ENCODE measurements at regions of chr7 and their contacts with region 1.

Region 1: DNA sequence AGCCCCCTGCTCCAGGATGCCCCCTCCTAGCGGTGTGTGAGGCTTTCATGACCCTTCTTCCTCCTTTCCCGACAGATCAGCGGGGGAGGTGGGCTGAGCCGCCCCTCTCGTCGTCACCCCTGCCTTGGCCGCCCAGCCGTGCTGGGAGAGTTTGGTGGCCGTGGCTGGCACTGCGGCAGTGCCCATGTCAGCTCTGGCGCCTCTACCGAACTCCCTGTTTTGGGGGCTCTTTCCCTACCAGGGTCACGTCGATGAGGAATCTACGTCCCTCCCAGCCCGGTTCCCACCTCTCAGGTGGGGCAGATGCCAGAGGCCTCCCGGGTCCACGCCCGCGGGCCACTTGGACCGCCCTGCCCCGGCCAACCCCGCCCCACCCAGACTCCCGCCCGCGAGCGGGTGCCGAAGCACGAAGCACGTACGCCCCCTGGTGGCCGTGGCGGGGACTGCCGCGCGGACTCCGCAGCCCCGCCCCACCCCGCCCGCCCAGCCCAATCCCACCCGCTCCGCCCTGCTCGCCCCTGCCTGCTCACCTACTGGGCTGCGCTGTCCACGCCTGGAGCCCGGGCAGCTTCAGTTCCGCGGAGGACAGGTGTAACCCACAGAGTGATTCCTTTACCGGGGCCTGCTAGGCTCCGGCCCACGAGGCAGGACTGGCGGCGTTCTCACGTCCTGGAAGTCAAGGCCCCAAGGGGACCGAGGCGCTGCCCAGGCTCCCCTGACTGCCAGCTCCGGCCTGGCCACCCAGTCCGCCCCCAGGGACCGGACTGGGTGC is 127.1 kb downstream of the UBE2H start:
- DNase-seq: peak; percentile 90
- H3K4me3 ChIP-seq: peak overlapping the region in 2 of 3 donors; percentile 16 to 75
- H3K27ac ChIP-seq: peak overlapping the region; percentile 34 to 67 (median 49)
- H3K4me1 ChIP-seq: peaks cover 22 to 27% of the 10 kb centered on the region in 2 donors
- H3K27me3 ChIP-seq: no peaks in the 10 kb centered on the region
- CTCF ChIP-seq: peak; percentile 47 to 100 (median 75)
- POLR2A ChIP-seq: no peak

Region 2: DNA sequence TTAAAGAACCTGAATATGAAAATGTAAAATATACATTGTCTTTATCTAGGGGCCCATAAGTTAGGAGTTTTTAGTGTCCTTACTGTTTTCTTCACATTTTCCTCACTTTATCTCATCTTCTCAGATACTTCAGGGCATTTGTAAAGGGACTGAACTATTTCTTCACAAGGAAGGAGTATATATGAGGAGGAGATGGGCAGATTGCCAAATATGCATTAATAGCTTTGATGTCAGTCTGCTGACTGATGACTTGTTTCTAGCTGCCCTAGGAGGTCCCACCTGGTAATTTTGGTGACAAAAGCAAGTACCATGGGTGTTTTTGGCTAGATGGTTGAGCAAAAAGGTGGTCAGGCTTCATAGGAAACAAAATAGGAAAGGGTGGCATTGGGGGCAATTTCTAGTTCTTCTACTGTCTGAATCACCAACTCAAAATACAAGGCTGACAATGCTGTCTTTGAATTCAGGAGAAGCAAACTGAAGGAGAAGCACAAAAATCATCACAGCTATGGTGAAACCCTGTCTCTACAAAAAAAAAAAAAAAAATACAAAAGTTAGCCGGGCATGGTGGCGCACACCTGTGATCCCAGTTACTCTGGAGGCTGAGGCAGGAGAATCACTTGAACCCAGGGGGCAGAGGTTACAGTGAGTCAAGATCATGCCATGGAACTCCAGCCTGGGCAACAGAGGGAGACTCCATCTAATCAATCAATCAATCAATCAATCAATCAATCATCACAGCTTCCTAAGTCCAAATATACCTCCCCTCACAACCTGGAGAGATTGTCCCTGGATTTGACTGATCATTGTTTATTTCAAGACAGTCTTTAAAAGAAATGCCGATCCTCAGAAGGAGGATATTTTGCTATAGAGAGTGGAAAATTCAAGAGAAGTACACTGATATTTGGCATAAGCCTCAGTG is 401.7 kb before region 1 on chr7:
- intact Hi-C with region 1: no loop called
- DNase-seq: no peak
- H3K4me3 ChIP-seq: no peak overlapping the region
- H3K27ac ChIP-seq: no peak overlapping the region
- H3K4me1 ChIP-seq: peaks cover 0 to 4% of the 10 kb centered on the region in 2 donors
- H3K27me3 ChIP-seq: no peaks in the 10 kb centered on the region
- CTCF ChIP-seq: no peak
- POLR2A ChIP-seq: no peak

Region 3: DNA sequence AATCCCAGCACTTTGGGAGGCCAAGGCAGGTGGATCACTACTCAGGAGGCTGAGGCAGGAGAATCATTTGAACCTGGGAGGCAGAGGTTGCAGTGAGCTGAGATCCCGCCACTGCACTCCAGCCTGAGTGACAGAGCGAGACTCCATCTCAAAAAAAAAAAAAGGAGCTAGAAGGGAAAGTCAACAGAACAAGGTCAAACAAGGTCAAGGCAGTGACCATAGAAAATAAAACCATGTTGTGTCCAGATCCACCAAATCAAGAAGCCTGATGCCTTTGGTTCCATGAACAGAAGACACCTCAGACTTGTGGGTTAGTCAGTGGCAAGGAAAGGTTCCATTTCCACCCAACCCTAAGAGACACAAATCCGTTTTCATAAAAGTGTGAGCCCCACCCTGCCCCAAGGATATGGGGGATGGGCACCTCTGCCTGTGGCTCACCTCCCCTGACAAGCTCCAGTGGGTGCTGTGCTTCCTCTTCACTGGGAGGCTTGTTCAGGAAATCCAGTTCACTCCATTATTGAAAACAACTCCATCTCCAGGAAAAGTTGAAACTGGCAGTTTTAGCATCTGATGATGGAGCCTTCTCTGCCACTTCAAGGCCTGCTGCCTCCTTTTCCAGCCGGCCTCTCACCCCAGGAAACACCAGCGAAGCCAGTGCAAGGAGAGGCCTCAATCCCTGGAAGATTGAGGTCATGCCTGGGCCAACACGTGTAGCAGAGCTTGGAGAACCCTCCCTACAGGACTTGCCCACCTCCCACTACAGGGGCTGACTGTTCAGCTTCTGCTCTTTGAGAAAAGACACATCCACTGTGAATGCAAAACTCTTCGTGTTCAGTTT is 61.2 kb before region 1 on chr7:
- intact Hi-C with region 1: no loop called
- DNase-seq: no peak
- H3K4me3 ChIP-seq: no peak overlapping the region
- H3K27ac ChIP-seq: no peak overlapping the region
- H3K4me1 ChIP-seq: no peaks in the 10 kb centered on the region
- H3K27me3 ChIP-seq: no peaks in the 10 kb centered on the region
- CTCF ChIP-seq: no peak
- POLR2A ChIP-seq: no peak

Region 4: GRCh38 chr7:129896568-129897382 is 71.1 kb after region 1 on chr7:
- intact Hi-C with region 1: no loop called
- DNase-seq: no peak
- H3K4me3 ChIP-seq: no peak overlapping the region
- H3K27ac ChIP-seq: no peak overlapping the region
- H3K4me1 ChIP-seq: peaks cover 13 to 19% of the 10 kb centered on the region in 2 donors
- H3K27me3 ChIP-seq: no peaks in the 10 kb centered on the region
- CTCF ChIP-seq: no peak
- POLR2A ChIP-seq: no peak

Region 5: GRCh38 chr7:129923709-129924108 is 98.0 kb after region 1 on chr7:
- intact Hi-C with region 1: no loop called
- DNase-seq: peak; percentile 14 to 16
- H3K4me3 ChIP-seq: no peak overlapping the region
- H3K27ac ChIP-seq: peak overlapping the region; percentile 41 to 58 (median 48)
- H3K4me1 ChIP-seq: peaks cover 27 to 29% of the 10 kb centered on the region in 2 donors
- H3K27me3 ChIP-seq: no peaks in the 10 kb centered on the region
- CTCF ChIP-seq: no peak
- POLR2A ChIP-seq: no peak

Region 6: DNA sequence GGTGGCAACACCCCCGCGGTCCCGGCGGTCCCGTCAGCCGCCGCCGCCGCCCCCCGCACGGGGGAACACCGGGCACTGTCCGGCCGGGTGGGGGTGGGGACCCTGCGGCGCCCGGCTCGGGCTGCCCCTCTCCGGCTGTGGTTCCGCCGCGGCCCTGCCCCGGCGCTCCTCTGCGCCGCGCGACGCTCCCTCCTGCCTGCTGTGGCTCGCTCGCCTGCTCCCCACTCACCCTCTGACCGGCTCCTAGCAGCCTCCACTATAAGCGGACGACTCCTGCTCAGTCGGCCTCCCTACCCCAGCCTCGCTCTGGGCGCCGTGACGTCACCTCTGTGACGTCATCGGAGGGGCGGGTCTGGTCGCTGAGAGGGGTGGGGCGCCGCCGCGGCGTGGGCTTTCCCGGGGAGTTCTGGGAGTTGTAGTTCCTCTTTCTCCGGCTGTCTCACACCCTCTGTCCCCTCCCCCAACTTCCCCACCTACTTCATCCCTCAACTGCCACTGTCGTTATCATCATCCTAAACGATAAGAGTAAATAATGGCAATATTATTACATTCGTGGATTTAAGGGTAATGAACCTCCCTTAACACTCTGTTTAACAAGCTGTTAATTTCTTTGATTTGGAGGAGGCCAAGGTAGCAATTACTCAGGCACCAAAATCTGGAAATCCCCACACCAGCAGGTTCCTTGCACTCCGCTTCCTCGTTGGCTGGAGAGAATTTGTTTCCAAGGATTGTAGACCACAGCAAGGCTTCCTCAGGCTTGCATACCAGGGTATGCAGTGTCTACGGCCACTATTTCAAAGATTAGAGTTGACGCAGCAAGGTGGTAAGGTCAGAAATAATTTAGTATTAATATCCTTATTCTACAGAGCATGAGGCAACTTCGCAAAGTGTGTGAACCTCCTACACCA is 127.2 kb after region 1 on chr7 and contains the start of gene UBE2H:
- intact Hi-C with region 1: loop called (anchors 5 kb)
- DNase-seq: peak; percentile 84 to 88
- H3K4me3 ChIP-seq: peak within 1 kb of the TSS; percentile 43 to 94 (median 80)
- H3K27ac ChIP-seq: peak within 1 kb of the TSS; percentile 98
- H3K4me1 ChIP-seq: peaks cover 9 to 25% of the 10 kb centered on the region in 2 donors
- H3K27me3 ChIP-seq: no peaks in the 10 kb centered on the region
- CTCF ChIP-seq: peak in 1 of 6 experiments; percentile 36
- POLR2A ChIP-seq: peak; percentile 92 to 98
- total RNA-seq, gene UBE2H: 97.7 to 156 (median 122) TPM